Uterus (tissue), 4 donors: ENCODE measurements at regions of chr20 and their contacts with region 1.

Region 1: GRCh38 chr20:50625986-50626677 is 65.2 kb downstream of the RIPOR3 start:
- DNase-seq: peak; percentile 66 to 76
- H3K4me3 ChIP-seq: no peak overlapping the region
- H3K27ac ChIP-seq: peak overlapping the region; percentile 56 to 61
- H3K4me1 ChIP-seq: no peaks in the 10 kb centered on the region
- H3K27me3 ChIP-seq: no peaks in the 10 kb centered on the region
- CTCF ChIP-seq: peak; percentile 65 to 83 (median 74)
- POLR2A ChIP-seq: no peak

Region 2: GRCh38 chr20:50438986-50439407 is 187.1 kb before region 1 on chr20:
- intact Hi-C with region 1: no loop called
- DNase-seq: no peak
- H3K4me3 ChIP-seq: no peak overlapping the region
- H3K27ac ChIP-seq: peak overlapping the region in 1 of 2 donors; percentile 50
- H3K4me1 ChIP-seq: no peaks in the 10 kb centered on the region
- H3K27me3 ChIP-seq: no peaks in the 10 kb centered on the region
- CTCF ChIP-seq: no peak
- POLR2A ChIP-seq: no peak

Region 3: GRCh38 chr20:50713657-50714101 is 87.5 kb after region 1 on chr20:
- intact Hi-C with region 1: loop called (anchors 10 kb)
- DNase-seq: peak; percentile 60 to 67
- H3K4me3 ChIP-seq: no peak overlapping the region
- H3K27ac ChIP-seq: peak overlapping the region; percentile 65 to 71
- H3K4me1 ChIP-seq: no peaks in the 10 kb centered on the region
- H3K27me3 ChIP-seq: no peaks in the 10 kb centered on the region
- CTCF ChIP-seq: peak; percentile 47 to 70 (median 56)
- POLR2A ChIP-seq: no peak

Region 4: DNA sequence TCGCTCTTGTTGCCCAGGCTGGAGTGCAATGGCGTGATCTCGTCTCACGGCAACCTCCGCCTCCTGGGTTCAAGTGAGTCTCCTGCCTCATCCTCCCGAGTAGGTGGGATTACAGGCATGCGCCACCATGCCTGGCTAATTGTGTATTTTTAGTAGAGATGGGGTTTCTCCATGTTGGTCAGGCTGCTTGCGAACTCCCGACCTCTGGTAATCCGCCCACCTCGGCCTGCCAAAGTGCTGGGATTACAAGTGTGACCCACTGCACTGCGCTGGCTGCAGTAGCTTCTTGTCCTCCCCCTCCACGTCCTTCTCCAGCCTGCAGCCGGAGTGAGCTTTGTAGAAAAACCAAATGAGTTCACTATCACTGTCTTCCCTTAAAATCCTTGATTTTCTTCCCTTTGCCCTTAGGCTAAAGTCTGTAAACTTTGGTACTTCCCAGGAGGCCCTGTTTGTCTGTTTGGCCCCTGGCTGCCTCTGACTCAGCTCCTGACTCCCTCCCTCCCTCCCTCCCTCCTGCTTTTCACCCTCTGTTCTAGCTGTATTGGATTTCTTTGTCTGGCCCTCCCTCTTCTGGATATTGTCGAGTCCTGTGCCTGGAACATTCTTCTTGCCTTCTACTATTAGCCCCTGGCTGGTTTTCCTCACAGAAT is 118.1 kb after region 1 on chr20:
- intact Hi-C with region 1: loop called (anchors 10 kb)
- DNase-seq: peak; percentile 74 to 87
- H3K4me3 ChIP-seq: no peak overlapping the region
- H3K27ac ChIP-seq: peak overlapping the region; percentile 84 to 97
- H3K4me1 ChIP-seq: peaks cover 0 to 3% of the 10 kb centered on the region in 2 donors
- H3K27me3 ChIP-seq: no peaks in the 10 kb centered on the region
- CTCF ChIP-seq: peak; percentile 47 to 64 (median 62)
- POLR2A ChIP-seq: no peak